ENCODE measurements at regions of chr2 and their contacts with region 1.

Region 1: GRCh38 chr2:10832203-10832936 is 19.8 kb upstream of the PDIA6 start:
- DNase-seq: no peak
- H3K4me3 ChIP-seq: no peak overlapping the region
- H3K27ac ChIP-seq: no peak overlapping the region
- H3K4me1 ChIP-seq: no peaks in the 10 kb centered on the region
- H3K27me3 ChIP-seq: no peaks in the 10 kb centered on the region
- CTCF ChIP-seq: peak; percentile 76 to 80 (median 77)
- POLR2A ChIP-seq: no peak

Region 2: DNA sequence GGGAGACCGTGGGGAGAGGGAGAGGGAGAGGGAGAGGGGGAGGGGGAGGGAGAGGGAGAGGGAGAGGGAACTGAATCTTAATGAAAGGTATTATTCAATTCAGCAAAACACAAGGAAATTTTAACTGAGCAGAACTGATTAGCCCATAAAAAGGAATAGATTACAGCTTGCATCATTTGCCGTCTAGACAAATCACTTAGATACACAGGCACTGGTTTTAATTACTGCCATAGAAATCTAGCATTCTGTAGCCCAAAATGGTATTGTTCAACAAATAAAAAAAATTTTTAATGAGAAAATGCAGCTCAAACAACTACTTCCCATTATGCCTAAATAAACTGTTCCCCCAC is 71.5 kb after region 1 on chr2:
- intact Hi-C with region 1: loop called (anchors 2 kb)
- DNase-seq: no peak
- H3K4me3 ChIP-seq: no peak overlapping the region
- H3K27ac ChIP-seq: no peak overlapping the region
- H3K4me1 ChIP-seq: no peaks in the 10 kb centered on the region
- H3K27me3 ChIP-seq: no peaks in the 10 kb centered on the region
- CTCF ChIP-seq: no peak
- POLR2A ChIP-seq: no peak

Region 3: GRCh38 chr2:11124503-11125068 is 292.2 kb after region 1 on chr2:
- intact Hi-C with region 1: loop called (anchors 5 kb)
- DNase-seq: no peak
- H3K4me3 ChIP-seq: no peak overlapping the region
- H3K27ac ChIP-seq: no peak overlapping the region
- H3K4me1 ChIP-seq: peaks cover 15% of the 10 kb centered on the region
- H3K27me3 ChIP-seq: no peaks in the 10 kb centered on the region
- CTCF ChIP-seq: peak in 2 of 3 experiments; percentile 17 to 27
- POLR2A ChIP-seq: no peak

Measured in vagina (tissue), 2 donors.